Ovary (tissue), 10 donors: ENCODE measurements at regions of chr4 and their contacts with region 1.

Region 1: DNA sequence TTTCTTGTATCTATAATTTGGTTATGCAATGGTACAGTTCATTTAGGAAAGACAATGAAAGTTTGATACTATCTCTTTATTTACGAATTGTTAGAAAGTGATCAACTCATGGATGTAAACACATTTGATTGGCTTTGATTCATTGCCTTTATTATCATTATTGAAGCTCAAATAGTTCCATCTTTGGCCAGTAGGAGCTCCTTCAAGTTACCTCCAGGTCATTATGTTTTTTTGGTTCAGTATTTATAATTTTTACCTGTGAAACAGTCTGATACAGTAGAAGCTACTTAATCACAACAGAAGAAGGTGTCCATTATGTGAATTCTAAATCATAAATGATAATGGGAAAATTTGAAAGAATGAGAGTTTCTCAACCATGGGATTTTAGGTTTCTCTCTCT is 12.4 kb downstream of the NPY5R start:
- DNase-seq: no peak
- H3K4me3 ChIP-seq: no peak overlapping the region
- H3K27ac ChIP-seq: no peak overlapping the region
- H3K4me1 ChIP-seq: no peaks in the 10 kb centered on the region
- H3K27me3 ChIP-seq: no peaks in the 10 kb centered on the region
- CTCF ChIP-seq: no peak
- EP300 ChIP-seq: no peak
- POLR2A ChIP-seq: no peak

Region 2: GRCh38 chr4:163343604-163344146 is 12.4 kb before region 1 on chr4 and contains the start of gene NPY5R:
- intact Hi-C with region 1: loop called in 1 of 4 experiments (anchors 1 kb)
- DNase-seq: no peak
- H3K4me3 ChIP-seq: peak within 1 kb of the TSS; percentile 36
- H3K27ac ChIP-seq: no peak within 1 kb of the TSS
- H3K4me1 ChIP-seq: peaks cover 3% of the 10 kb centered on the region
- H3K27me3 ChIP-seq: no peaks in the 10 kb centered on the region
- CTCF ChIP-seq: no peak
- EP300 ChIP-seq: no peak
- POLR2A ChIP-seq: no peak
- total RNA-seq, gene NPY5R: 0.18 to 0.69 TPM in 2 of 7 donors, not detected in the others

Region 3: DNA sequence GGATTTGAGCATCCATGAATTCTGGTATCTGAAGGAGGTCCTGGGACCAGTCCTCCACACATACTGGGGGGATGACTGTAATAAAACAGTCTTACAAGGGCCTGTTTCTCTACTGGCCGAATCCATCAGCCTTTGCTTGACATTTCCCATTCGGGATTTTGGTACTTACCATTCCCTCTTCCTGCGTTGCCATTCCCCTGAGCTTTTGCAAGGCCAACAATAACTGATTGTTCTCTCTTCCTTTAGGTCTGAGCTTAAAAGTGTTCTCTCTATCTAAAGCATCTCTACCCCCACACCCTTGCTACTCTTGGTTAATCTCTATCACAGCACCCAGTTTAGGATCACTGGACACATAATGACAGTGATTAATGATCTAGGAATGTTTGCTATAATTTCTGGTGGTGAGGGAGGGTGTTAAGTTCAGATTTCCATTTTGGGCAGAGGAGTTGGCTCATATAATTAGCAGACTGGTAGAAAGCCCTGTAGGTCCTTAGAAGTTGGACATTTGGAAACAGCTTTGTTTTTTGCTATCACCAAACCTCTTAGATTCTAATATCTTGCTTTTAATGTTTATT is 167.8 kb after region 1 on chr4:
- intact Hi-C with region 1: no loop called
- DNase-seq: no peak
- H3K4me3 ChIP-seq: no peak overlapping the region
- H3K27ac ChIP-seq: no peak overlapping the region
- H3K4me1 ChIP-seq: no peaks in the 10 kb centered on the region
- H3K27me3 ChIP-seq: no peaks in the 10 kb centered on the region
- CTCF ChIP-seq: no peak
- EP300 ChIP-seq: no peak
- POLR2A ChIP-seq: no peak